GM10248 (cell line): ENCODE measurements at regions of chr13 and their contacts with region 1.

Region 1: GRCh38 chr13:114281351-114282040 is at the start of gene UPF3A:
- DNase-seq: peak; percentile 92
- CTCF ChIP-seq: no peak

Region 2: GRCh38 chr13:114222461-114222968 is 59.0 kb before region 1 on chr13:
- CTCF ChIA-PET with region 1: no interaction called
- POLR2A ChIA-PET with region 1: no interaction called
- DNase-seq: no peak
- CTCF ChIP-seq: no peak

Region 3: GRCh38 chr13:114298866-114299265 is 17.4 kb after region 1 on chr13:
- CTCF ChIA-PET with region 1: no interaction called
- POLR2A ChIA-PET with region 1: no interaction called
- DNase-seq: no peak
- CTCF ChIP-seq: no peak

Region 4: DNA sequence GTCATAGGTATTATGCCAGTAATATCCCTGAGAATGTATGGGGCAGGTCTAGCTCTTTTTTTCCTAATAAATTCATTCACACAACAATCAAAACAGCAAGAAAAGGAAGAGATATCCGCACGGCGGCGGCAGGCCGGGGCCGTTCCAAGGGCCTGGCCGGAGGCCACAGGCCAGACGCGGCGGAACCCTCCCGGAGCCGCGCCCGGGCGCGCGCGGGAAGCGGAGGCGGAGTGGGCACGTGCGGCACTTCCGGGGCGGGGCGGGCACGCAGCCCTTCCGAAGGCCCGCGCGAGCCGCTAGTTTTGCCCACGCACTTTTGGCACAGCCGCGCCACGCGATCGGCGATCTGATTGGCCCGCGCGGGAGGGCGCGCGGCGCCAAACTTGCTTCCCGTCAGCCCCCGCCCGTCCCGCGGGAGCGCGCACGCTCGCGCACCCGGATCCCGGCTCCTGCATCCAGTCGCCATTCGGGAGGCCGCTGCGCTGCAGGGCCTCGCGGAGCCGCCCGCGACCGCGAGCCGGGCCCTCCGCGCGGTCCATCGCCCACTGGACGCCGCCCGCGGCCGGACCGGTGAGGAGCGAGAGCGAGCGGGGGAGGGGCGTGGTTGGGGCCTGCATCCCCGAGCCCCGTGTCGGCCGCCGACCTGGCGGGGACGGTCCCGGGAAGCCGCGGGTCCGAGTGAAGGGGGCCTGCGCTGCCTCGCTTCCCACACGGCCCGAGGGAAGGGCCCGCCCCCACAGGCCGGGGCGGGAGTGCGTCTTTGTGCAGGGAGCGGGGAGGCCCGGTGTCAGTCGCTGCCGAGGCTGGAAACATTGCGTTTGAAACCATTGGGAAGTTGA is 32.8 kb after region 1 on chr13 and contains the start of gene CHAMP1:
- CTCF ChIA-PET with region 1: interaction called, 4 read pairs
- POLR2A ChIA-PET with region 1: interaction called, 10 read pairs
- DNase-seq: peak; percentile 95
- CTCF ChIP-seq: no peak